ENCODE measurements at regions of chr7 and their contacts with region 1.

Region 1: GRCh38 chr7:130069978-130070860 is at the start of gene KLHDC10:
- DNase-seq: peak; percentile 97 to 98 (median 98)
- ATAC-seq: peak; percentile 98 to 100 (median 99)
- H3K4me3 ChIP-seq: peak within 1 kb of the TSS; percentile 74 to 98 (median 84)
- H3K27ac ChIP-seq: peak within 1 kb of the TSS; percentile 45 to 92 (median 87)
- H3K4me1 ChIP-seq: peaks cover 5 to 42% (median 22%) of the 10 kb centered on the region in 12 donors
- H3K27me3 ChIP-seq: no peaks in the 10 kb centered on the region
- CTCF ChIP-seq: peak in 1 of 12 donors; percentile 26
- POLR2A ChIP-seq: peak in 1 of 2 donors; percentile 66
- total RNA-seq, gene KLHDC10: 17.2 to 32.6 (median 26.5) TPM

Region 2: DNA sequence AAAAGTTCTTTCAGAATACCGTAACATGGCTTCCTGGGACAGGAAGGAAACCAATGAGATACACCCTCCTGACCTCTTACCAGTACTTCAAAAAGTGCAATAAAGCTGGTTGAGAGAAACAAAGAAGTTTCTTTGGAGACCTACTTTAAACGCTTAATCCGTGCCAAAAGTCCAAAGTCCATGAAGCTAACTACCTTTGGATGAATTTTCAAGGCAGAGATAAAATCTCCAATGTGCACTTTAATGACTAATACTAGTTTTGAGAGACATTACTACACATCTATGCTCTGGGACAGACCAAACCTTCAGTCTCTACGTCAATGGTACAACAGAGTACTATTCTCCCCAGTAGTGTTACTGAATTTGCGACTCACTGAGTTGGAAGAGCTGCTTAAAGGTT is 163.5 kb before region 1 on chr7:
- intact Hi-C with region 1: no loop called
- DNase-seq: no peak
- ATAC-seq: peak; percentile 56 to 84 (median 72)
- H3K4me3 ChIP-seq: no peak overlapping the region
- H3K27ac ChIP-seq: peak overlapping the region in 11 of 12 donors; percentile 31 to 85 (median 54)
- H3K4me1 ChIP-seq: peaks cover 0 to 75% (median 50%) of the 10 kb centered on the region in 12 donors
- H3K27me3 ChIP-seq: no peaks in the 10 kb centered on the region
- CTCF ChIP-seq: no peak
- POLR2A ChIP-seq: no peak

Region 3: GRCh38 chr7:130114374-130115135 is 44.3 kb after region 1 on chr7:
- intact Hi-C with region 1: no loop called
- DNase-seq: no peak
- ATAC-seq: no peak
- H3K4me3 ChIP-seq: no peak overlapping the region
- H3K27ac ChIP-seq: no peak overlapping the region
- H3K4me1 ChIP-seq: no peaks in the 10 kb centered on the region
- H3K27me3 ChIP-seq: no peaks in the 10 kb centered on the region
- CTCF ChIP-seq: no peak
- POLR2A ChIP-seq: no peak

Region 4: GRCh38 chr7:130205084-130205947 is 135.1 kb after region 1 on chr7 and contains the start of gene TMEM209:
- intact Hi-C with region 1: loop called in 2 of 10 experiments (anchors 2 to 5 kb)
- DNase-seq: peak; percentile 95 to 98 (median 96)
- ATAC-seq: peak; percentile 98 to 99 (median 99)
- H3K4me3 ChIP-seq: peak within 1 kb of the TSS; percentile 65 to 94 (median 78)
- H3K27ac ChIP-seq: peak within 1 kb of the TSS; percentile 62 to 93 (median 90)
- H3K4me1 ChIP-seq: peaks cover 0 to 18% (median 5%) of the 10 kb centered on the region in 12 donors
- H3K27me3 ChIP-seq: no peaks in the 10 kb centered on the region
- CTCF ChIP-seq: peak in 1 of 12 donors; percentile 8
- POLR2A ChIP-seq: peak in 1 of 2 donors; percentile 69
- total RNA-seq, gene TMEM209: 7.3 to 15.0 (median 10.1) TPM

Region 5: GRCh38 chr7:130668257-130669084 is 598.3 kb after region 1 on chr7 and contains the start of gene COPG2:
- intact Hi-C with region 1: loop called in 1 of 10 experiments (anchors 2 kb)
- DNase-seq: peak; percentile 87 to 93 (median 91)
- ATAC-seq: peak; percentile 98 to 100 (median 98)
- H3K4me3 ChIP-seq: peak within 1 kb of the TSS; percentile 56 to 93 (median 74)
- H3K27ac ChIP-seq: peak within 1 kb of the TSS; percentile 66 to 95 (median 87)
- H3K4me1 ChIP-seq: peaks cover 0 to 24% (median 8%) of the 10 kb centered on the region in 12 donors
- H3K27me3 ChIP-seq: no peaks in the 10 kb centered on the region
- CTCF ChIP-seq: peak in 1 of 12 donors; percentile 5
- POLR2A ChIP-seq: peak in 1 of 2 donors; percentile 67
- total RNA-seq, gene COPG2: 14.6 to 26.9 (median 19.5) TPM

Region 6: DNA sequence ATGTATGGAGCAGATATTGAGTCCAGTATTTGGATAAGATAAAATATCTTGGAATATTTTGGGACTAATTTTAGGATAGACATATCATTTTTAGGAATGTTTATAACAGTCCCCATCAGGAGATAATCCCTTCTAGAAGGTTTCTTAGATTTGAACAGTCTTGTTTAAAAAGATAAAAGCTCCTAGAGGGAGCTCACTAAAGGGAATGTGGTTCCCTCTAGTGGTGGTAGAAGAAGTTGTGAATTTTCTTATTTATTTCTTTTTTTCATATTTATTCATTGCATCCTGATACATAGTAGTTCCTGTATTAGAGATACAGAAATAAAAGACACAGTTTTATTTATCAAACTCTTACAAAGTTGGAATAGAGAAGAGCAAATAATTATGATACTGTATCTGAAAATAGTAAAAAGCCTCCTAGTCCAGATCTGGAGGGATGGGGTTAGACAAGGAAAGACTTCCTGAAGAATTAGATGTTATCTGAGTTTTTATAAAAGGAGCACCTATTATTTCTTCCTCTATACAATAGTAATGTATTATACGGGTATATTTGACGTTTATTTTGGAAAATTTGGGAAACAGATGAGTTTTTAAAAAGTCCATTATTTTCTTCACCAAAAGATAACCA is 688.3 kb after region 1 on chr7:
- intact Hi-C with region 1: loop called in 3 of 10 experiments (anchors 5 to 10 kb)
- DNase-seq: no peak
- ATAC-seq: no peak
- H3K4me3 ChIP-seq: no peak overlapping the region
- H3K27ac ChIP-seq: no peak overlapping the region
- H3K4me1 ChIP-seq: no peaks in the 10 kb centered on the region
- H3K27me3 ChIP-seq: peaks cover 0 to 4% (median 0%) of the 10 kb centered on the region in 9 donors
- CTCF ChIP-seq: peak; percentile 36 to 77 (median 66)
- POLR2A ChIP-seq: no peak

Region 7: DNA sequence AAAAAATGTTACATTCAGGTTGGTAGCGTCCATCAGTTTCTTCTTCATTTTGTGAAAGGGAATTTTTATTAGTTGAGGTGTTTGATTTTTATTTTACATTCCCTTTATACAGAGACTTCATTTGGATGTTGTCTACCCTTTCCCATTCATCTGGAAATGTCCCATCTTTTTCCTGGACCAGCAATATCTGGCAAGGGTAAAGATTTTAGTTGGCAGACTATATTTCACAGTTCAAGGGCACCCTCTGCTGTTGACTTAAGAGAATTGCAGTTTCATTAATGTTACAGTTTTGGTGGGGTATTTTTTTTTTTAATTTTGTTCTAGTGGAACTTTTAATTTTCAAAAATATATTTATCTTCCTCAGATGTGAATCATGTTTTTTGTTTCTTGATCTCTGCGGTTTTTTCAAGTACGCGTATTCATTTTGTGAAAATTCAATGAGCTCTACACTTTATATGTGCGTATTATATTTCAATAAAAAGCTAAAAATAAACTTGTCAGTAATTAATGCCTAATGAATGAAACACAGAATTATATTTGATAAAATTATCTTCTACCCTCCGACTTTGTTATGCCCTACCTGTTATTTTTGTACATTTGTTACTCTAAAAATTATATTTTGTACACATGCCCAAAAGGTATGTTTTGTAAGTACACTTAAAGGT is 761.7 kb after region 1 on chr7:
- intact Hi-C with region 1: loop called in 7 of 10 experiments (anchors 5 to 10 kb)
- DNase-seq: no peak
- ATAC-seq: no peak
- H3K4me3 ChIP-seq: no peak overlapping the region
- H3K27ac ChIP-seq: no peak overlapping the region
- H3K4me1 ChIP-seq: no peaks in the 10 kb centered on the region
- H3K27me3 ChIP-seq: no peaks in the 10 kb centered on the region
- CTCF ChIP-seq: peak; percentile 58 to 87 (median 72)
- POLR2A ChIP-seq: no peak